Sciatic nerve (tissue), 2 donors: ENCODE measurements at regions of chr1 and their contacts with region 1.

Region 1: DNA sequence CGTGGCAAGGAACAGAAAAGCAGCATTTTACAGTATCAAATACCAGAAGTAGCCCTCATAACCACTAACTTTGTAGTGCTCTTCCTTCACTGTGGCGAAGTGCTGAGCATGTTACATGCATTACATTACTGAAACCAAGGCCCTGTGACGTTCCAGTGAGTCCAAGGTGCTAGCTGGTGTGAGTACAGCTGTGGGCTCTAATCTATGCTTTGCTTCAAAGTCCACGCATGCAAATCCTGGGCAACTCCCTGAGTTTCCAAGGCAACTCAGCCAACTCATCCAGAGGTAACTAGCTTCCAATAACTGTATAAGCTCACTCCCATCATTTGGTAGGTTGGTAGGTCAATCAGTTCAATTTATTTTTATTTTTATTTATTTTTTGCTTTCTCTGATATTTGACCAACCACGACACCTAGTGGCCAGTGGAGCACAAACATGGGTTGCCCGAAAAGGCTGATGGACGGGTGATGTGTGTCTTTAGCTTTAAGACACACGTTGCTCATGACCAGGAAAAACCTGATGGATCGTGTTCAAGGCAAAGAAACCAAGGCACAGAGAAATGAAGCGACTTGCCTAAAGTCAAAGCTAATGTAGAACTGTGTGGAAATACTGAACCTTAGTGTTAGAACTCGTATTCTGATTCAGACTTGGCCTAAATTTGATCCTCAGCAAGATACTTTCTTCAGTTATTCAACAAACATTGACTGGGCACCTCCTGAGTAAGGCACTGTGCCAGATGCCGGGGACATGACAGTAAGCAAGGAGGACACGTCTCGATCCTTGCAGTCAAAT is 73.0 kb downstream of the GNG12 start:
- DNase-seq: peak; percentile 79
- ATAC-seq: peak; percentile 71

Region 2: GRCh38 chr1:66339944-66340343 is 1420.3 kb before region 1 on chr1:
- intact Hi-C with region 1: no loop called
- DNase-seq: no peak
- ATAC-seq: peak; percentile 67

Region 3: GRCh38 chr1:67468066-67468718 is 292.0 kb before region 1 on chr1:
- intact Hi-C with region 1: no loop called
- DNase-seq: no peak
- ATAC-seq: no peak

Region 4: GRCh38 chr1:67536957-67537666 is 223.1 kb before region 1 on chr1:
- intact Hi-C with region 1: loop called (anchors 2 kb)
- DNase-seq: no peak
- ATAC-seq: peak; percentile 60

Region 5: GRCh38 chr1:67626495-67627235 is 133.6 kb before region 1 on chr1:
- intact Hi-C with region 1: no loop called
- DNase-seq: no peak
- ATAC-seq: no peak

Region 6: DNA sequence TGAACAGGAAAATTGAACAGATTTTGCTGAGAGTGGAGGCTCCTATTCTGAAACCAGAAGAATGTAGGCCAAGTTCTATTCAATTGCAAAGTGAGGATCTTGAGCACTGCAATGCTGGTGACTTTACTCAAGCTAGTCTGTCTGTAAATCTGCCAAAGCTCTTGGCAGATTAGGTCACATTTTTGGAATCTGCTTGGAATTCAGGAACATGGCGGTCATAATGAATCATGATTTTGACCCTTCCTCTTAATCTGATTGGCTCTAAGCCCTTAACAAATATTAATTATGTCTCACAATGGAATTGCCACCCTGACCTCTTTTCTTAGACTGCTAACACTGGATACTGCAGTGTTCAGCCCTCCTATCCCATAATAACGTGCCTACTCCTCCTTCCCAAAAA is 80.2 kb after region 1 on chr1:
- intact Hi-C with region 1: no loop called
- DNase-seq: no peak
- ATAC-seq: peak; percentile 66